T-cell (primary cell): ENCODE measurements at regions of chr18 and their contacts with region 1.

Region 1: DNA sequence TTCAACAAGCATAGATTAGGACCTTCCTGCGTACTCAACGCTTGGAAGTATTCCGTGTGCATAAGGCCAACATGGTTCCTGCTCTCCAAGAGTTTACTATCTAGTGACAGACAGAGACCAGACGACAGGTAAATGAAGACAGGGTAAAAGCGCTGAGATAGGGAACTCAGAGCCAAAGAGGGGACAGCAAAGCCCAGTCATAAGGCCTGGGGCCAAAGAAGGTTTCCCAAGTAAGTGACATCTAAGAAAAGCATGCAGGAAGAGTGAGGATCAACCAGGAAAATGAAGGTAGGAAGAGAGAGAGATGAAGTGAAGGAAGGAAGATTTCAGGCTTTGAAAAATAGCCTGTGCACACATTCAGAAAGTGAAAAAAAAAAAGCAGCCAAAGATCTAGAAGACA is 76.9 kb upstream of the CDH20 start:
- DNase-seq: no peak
- ATAC-seq: no peak
- H3K4me3 ChIP-seq: no peak overlapping the region
- H3K4me3 Mint-ChIP-seq: no peak overlapping the region
- H3K27ac ChIP-seq: no peak overlapping the region
- H3K27ac Mint-ChIP-seq: no peak overlapping the region
- H3K4me1 ChIP-seq: no peaks in the 10 kb centered on the region
- H3K4me1 Mint-ChIP-seq: no peaks in the 10 kb centered on the region
- H3K27me3 ChIP-seq: no peaks in the 10 kb centered on the region
- H3K27me3 Mint-ChIP-seq: no peaks in the 10 kb centered on the region

Region 2: DNA sequence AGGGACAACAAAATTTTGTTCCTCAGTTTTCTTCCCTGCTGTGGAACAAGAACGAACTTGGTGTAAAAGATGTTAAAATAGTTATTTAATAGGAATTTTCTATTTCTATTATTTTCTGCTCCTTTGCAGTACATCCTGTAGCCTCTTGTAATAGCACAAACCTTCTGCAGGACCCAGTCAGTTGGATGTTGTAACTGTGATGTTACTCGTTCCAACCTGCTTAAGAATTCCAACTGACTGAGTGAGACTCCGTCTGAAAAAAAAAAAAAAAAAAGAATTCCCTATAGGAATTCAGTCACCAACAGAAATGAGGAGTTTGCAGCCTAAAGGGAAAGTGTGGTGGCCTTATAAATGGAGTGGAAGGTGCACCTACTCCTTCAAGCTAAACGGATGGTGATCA is 30.6 kb after region 1 on chr18:
- CTCF ChIA-PET with region 1: no interaction called
- POLR2A ChIA-PET with region 1: no interaction called
- DNase-seq: no peak
- ATAC-seq: no peak
- H3K4me3 ChIP-seq: no peak overlapping the region
- H3K4me3 Mint-ChIP-seq: no peak overlapping the region
- H3K27ac ChIP-seq: no peak overlapping the region
- H3K27ac Mint-ChIP-seq: no peak overlapping the region
- H3K4me1 ChIP-seq: no peaks in the 10 kb centered on the region
- H3K4me1 Mint-ChIP-seq: no peaks in the 10 kb centered on the region
- H3K27me3 ChIP-seq: no peaks in the 10 kb centered on the region
- H3K27me3 Mint-ChIP-seq: no peaks in the 10 kb centered on the region

Region 3: DNA sequence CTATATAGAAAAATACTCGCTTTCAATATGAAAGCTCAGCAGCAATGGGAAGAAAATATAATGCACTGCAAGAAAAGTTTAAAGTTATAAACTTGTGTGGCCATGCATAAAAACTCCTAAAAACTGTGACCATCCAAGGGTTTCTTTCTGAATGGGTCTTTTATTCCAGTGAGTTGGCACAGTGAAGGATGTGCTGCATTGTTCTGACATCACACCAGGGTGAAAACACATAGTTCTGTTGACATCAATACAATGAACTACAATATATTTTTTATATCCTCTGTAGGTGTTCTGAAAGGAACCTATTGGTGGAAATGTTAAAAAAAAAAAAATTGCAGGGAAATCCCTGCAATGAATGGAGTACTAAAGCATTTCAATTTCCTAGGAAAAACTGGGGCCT is 157.1 kb after region 1 on chr18:
- CTCF ChIA-PET with region 1: no interaction called
- POLR2A ChIA-PET with region 1: interaction called in 1 of 2 experiments, 12 read pairs
- DNase-seq: no peak
- ATAC-seq: no peak
- H3K4me3 ChIP-seq: no peak overlapping the region
- H3K4me3 Mint-ChIP-seq: no peak overlapping the region
- H3K27ac ChIP-seq: no peak overlapping the region
- H3K27ac Mint-ChIP-seq: no peak overlapping the region
- H3K4me1 ChIP-seq: no peaks in the 10 kb centered on the region
- H3K4me1 Mint-ChIP-seq: no peaks in the 10 kb centered on the region
- H3K27me3 ChIP-seq: no peaks in the 10 kb centered on the region
- H3K27me3 Mint-ChIP-seq: no peaks in the 10 kb centered on the region